ENCODE measurements at regions of chr1 and their contacts with region 1.

Region 1: DNA sequence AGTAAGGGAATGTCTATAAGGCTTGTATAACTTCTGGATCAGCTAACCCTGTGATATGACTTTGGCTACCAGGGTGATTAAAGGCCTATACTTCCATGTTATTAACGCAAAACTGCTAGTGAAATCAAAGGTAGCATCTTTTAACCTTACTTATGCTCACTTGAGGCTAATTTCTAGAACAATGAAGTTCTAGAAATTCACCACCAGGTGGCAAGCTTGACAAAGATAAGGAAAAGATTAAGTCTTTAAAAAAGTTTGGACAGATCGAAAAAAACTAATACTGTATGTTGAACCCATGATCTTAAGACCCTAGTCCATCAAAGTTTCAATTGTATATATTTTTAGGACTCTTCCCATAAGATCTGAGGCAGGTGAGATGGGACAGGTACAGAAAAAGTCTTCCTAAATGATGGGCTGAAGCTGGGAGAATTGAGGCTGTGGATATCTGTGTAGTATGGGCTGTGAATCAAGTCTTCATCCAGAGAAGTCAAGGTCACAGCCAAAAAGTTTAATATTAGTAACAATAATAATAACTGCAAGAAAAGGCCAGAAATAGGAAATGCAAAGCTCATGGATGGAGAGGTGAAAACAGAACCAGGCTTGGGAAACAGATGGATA is 18.8 kb downstream of the KYAT3 start:
- DNase-seq: no peak
- H3K4me3 Mint-ChIP-seq: no peak overlapping the region
- H3K27ac Mint-ChIP-seq: peak overlapping the region; percentile 4
- H3K4me1 Mint-ChIP-seq: peaks cover 21% of the 10 kb centered on the region
- H3K27me3 Mint-ChIP-seq: no peaks in the 10 kb centered on the region

Region 2: GRCh38 chr1:88983791-88984559 is 10.3 kb after region 1 on chr1:
- intact Hi-C with region 1: loop called (anchors 1 kb)
- DNase-seq: peak; percentile 79
- H3K4me3 Mint-ChIP-seq: peak overlapping the region; percentile 54
- H3K27ac Mint-ChIP-seq: peak overlapping the region; percentile 90
- H3K4me1 Mint-ChIP-seq: peaks cover 77% of the 10 kb centered on the region
- H3K27me3 Mint-ChIP-seq: no peaks in the 10 kb centered on the region